MCF 10A (cell line): ENCODE measurements at regions of chr6 and their contacts with region 1.

Region 1: DNA sequence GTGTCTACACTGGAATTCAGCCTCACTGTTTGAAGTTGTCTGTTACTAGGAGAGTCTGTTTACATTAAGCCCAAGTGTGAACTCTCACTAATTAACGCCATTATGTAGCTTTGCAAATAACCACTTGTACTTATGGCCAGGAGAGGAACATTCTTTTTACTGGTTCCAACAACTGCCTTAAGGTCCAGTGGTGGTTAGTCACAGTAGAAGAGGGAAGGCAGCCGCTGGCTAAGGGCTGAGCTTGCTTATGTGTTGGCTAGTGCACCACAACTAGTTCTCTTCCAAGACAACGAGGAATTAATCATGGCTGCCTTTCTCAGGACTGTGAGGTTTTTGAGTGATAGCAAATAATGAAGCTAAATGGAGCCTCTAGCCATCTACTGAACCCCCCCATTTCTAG is 14.9 kb upstream of the SLC22A23 start:
- DNase-seq: no peak
- H3K4me3 Mint-ChIP-seq: no peak overlapping the region
- H3K27ac Mint-ChIP-seq: no peak overlapping the region
- H3K4me1 Mint-ChIP-seq: peaks cover 12% of the 10 kb centered on the region
- H3K27me3 Mint-ChIP-seq: no peaks in the 10 kb centered on the region
- CTCF ChIP-seq: no peak

Region 2: GRCh38 chr6:3258720-3259490 is 212.8 kb before region 1 on chr6 and contains the start of gene PSMG4:
- CTCF ChIA-PET with region 1: no interaction called
- POLR2A ChIA-PET with region 1: interaction called, 10 read pairs
- intact Hi-C with region 1: no loop called
- DNase-seq: peak; percentile 87
- H3K4me3 Mint-ChIP-seq: peak within 1 kb of the TSS; percentile 97
- H3K27ac Mint-ChIP-seq: peak within 1 kb of the TSS; percentile 65
- H3K4me1 Mint-ChIP-seq: peaks cover 8% of the 10 kb centered on the region
- H3K27me3 Mint-ChIP-seq: no peaks in the 10 kb centered on the region
- CTCF ChIP-seq: no peak
- total RNA-seq, gene PSMG4: 27.9 and 40.0 TPM in 2 replicates

Region 3: DNA sequence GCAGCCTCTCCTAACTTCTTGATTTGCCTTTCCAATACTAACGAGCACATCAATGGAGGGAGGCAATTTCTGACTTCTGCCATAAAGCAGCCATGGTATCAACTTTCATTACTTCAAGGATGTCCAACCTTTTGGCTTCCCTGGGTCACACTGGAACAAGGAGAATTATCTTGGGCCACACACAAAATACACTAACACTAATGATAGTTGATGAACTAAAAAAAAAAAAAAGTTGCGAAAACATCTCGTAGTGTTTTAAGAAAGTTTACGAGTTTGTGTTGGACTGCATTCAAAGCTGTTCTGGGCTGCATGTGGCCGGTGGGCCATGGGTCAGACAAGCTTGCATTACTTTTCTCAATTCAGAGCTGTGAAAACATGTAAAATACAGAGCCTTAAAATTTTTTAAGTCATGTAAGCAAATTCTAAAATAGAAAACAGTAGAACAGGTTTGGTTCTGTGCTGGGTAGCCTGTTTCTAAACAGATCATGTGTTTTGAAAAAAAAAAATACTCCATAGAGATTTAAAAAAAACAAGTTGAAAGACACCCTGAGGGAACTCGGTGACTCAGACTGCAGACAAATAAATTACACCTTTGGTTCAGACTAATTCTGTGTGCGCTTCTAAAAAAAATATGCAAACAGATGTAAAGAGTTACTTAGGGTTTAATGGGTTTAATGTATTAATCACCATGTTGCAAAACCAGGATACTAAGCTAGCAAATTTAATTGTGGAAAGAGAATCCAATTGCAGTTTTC is 28.7 kb after region 1 on chr6:
- CTCF ChIA-PET with region 1: interaction called, 5 read pairs
- POLR2A ChIA-PET with region 1: interaction called, 28 read pairs
- intact Hi-C with region 1: no loop called
- DNase-seq: peak; percentile 89
- H3K4me3 Mint-ChIP-seq: peak overlapping the region; percentile 39
- H3K27ac Mint-ChIP-seq: peak overlapping the region; percentile 74
- H3K4me1 Mint-ChIP-seq: peaks cover 15% of the 10 kb centered on the region
- H3K27me3 Mint-ChIP-seq: peaks cover 17% of the 10 kb centered on the region
- CTCF ChIP-seq: no peak

Region 4: DNA sequence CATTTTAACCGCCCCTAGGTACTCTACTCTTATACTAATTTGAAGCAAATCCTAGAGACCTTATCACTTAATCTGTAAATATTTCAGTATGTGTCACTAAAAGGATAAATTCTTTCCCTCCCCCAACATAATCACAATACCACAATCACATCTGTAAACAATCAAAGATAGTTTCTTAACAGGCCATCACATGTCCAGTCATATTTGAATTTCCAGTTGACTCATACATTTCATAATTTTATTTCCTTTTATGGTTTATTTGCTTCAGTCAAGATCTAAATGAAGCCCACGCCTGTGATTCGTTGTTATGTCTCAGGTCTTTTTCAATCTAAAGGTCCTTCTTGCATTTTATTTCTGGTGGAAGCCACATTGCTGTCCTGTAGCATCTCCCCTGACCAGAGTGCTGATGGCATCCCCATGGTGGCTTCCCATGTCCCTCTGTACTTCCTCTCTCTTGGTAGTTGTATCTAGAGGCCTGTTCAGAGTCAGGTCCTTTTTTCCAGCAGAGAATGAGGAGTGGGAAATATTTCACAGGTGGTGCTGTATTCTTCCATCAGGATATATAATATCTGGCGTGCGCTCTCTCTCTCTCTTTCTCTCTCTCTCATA is 113.7 kb after region 1 on chr6:
- CTCF ChIA-PET with region 1: no interaction called
- POLR2A ChIA-PET with region 1: no interaction called
- intact Hi-C with region 1: no loop called
- DNase-seq: peak; percentile 78
- H3K4me3 Mint-ChIP-seq: peak overlapping the region; percentile 1
- H3K27ac Mint-ChIP-seq: peak overlapping the region; percentile 60
- H3K4me1 Mint-ChIP-seq: peaks cover 15% of the 10 kb centered on the region
- H3K27me3 Mint-ChIP-seq: no peaks in the 10 kb centered on the region
- CTCF ChIP-seq: no peak

Region 5: DNA sequence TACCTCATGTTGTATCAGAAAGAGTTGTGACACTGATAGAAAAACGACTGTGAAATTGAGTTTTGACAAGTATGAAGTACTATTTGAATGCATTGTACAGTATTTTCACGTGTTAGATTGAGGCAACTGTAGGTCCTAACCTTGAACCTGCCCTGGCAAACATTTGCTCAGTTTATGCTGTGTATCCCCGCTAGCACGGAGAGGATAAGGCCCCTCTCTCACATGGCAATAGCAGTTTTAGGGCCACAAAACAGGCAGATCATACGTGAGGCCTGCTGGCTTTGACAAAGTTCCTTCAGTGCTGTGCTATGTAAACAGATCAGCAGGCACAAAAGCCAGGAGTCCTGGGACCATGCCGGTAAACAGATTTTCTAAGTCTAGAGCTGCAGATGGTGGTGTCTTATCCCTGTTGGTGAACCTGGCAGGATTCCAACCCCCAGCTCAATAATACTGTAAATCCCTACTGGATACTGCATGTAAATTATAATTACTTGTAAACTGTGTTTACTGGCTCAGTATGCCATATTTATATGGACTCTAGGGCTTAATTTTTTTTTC is 631.1 kb after region 1 on chr6:
- CTCF ChIA-PET with region 1: no interaction called
- POLR2A ChIA-PET with region 1: no interaction called
- intact Hi-C with region 1: no loop called
- DNase-seq: no peak
- H3K4me3 Mint-ChIP-seq: no peak overlapping the region
- H3K27ac Mint-ChIP-seq: no peak overlapping the region
- H3K4me1 Mint-ChIP-seq: peaks cover 6% of the 10 kb centered on the region
- H3K27me3 Mint-ChIP-seq: no peaks in the 10 kb centered on the region
- CTCF ChIP-seq: no peak